B cell (primary cell): ENCODE measurements at regions of chr15 and their contacts with region 1.

Region 1: DNA sequence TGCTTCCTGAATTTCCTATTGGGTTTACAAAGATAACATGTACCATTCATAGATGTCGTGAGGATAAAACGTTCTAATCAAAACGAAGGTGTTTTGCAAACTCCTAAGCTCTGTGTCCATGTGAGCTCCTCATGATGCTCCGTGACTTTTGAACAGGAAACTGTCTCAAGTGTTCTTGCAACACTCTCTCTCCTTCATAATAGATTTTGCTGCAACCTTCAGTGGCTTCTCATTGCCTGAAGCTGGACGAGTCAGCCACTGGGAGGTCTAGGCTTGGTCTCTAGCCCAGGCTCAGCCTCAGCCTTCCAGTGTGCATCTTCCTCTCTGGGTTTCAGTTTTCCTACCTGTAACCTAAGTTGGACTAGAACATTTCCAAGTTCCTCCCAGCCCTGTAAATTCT is 18.7 kb upstream of the BCL2A1 start:
- DNase-seq: no peak
- ATAC-seq: no peak
- H3K4me3 ChIP-seq: no peak overlapping the region
- H3K4me3 Mint-ChIP-seq: no peak overlapping the region
- H3K27ac ChIP-seq: no peak overlapping the region
- H3K27ac Mint-ChIP-seq: no peak overlapping the region
- H3K4me1 ChIP-seq: peaks cover 0 to 5% of the 10 kb centered on the region in 2 donors
- H3K4me1 Mint-ChIP-seq: peaks cover 19% of the 10 kb centered on the region
- H3K27me3 ChIP-seq: peaks cover 0 to 12% (median 1%) of the 10 kb centered on the region in 4 experiments
- H3K27me3 Mint-ChIP-seq: peaks cover 5% of the 10 kb centered on the region
- CTCF ChIP-seq: no peak

Region 2: GRCh38 chr15:79798311-79798710 is 191.4 kb before region 1 on chr15:
- CTCF ChIA-PET with region 1: no interaction called
- POLR2A ChIA-PET with region 1: no interaction called
- intact Hi-C with region 1: no loop called
- DNase-seq: no peak
- ATAC-seq: no peak
- H3K4me3 ChIP-seq: no peak overlapping the region
- H3K4me3 Mint-ChIP-seq: no peak overlapping the region
- H3K27ac ChIP-seq: no peak overlapping the region
- H3K27ac Mint-ChIP-seq: no peak overlapping the region
- H3K4me1 ChIP-seq: no peaks in the 10 kb centered on the region
- H3K4me1 Mint-ChIP-seq: no peaks in the 10 kb centered on the region
- H3K27me3 ChIP-seq: no peaks in the 10 kb centered on the region
- H3K27me3 Mint-ChIP-seq: peaks cover 3% of the 10 kb centered on the region
- CTCF ChIP-seq: no peak

Region 3: DNA sequence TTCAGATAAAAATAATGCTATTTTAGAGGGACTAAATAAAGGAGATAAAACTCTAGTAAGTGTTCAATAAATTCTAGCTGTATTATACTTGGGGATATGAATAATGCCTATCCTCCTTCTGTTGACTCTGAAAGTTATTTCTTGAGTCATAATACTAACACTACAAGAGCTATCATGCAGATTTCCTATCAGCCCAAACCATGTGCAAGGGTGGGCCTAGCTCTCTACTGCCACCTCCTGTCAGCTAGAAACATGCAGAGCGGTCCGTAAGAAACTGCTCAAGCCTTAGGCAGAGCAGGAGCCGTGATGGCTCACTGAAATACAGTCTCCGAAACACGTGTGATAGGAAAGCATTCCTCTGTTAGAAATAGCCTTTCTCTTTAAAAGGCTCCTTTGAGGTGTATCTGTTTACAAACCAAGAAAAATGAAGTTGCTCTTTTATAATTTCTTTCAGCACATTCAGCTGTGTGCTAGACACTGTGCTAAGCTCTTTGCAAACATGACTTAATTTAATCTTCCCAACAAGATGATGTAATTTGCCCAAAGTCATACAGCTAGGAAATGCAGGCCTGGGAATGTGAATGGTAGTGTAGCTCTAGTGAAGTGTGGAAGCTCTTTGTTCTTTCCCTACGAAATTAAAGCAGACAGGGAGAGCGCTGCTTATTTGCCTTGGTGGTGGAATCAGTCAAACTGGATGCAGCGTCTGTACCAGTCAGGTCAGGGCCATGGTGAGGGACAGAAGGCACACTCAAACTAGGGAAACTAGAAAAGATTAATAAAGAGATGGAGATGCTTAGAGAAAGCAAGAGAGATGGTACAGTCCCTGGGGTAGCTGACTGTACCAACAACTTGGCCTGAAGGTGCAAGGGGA is 136.0 kb before region 1 on chr15:
- CTCF ChIA-PET with region 1: interaction called, 29 read pairs
- POLR2A ChIA-PET with region 1: no interaction called
- intact Hi-C with region 1: loop called (anchors 1 kb)
- DNase-seq: peak; percentile 73
- ATAC-seq: peak; percentile 97
- H3K4me3 ChIP-seq: no peak overlapping the region
- H3K4me3 Mint-ChIP-seq: no peak overlapping the region
- H3K27ac ChIP-seq: no peak overlapping the region
- H3K27ac Mint-ChIP-seq: no peak overlapping the region
- H3K4me1 ChIP-seq: peaks cover 7 to 8% of the 10 kb centered on the region in 2 donors
- H3K4me1 Mint-ChIP-seq: peaks cover 29% of the 10 kb centered on the region
- H3K27me3 ChIP-seq: no peaks in the 10 kb centered on the region
- H3K27me3 Mint-ChIP-seq: no peaks in the 10 kb centered on the region
- CTCF ChIP-seq: peak; percentile 98

Region 4: DNA sequence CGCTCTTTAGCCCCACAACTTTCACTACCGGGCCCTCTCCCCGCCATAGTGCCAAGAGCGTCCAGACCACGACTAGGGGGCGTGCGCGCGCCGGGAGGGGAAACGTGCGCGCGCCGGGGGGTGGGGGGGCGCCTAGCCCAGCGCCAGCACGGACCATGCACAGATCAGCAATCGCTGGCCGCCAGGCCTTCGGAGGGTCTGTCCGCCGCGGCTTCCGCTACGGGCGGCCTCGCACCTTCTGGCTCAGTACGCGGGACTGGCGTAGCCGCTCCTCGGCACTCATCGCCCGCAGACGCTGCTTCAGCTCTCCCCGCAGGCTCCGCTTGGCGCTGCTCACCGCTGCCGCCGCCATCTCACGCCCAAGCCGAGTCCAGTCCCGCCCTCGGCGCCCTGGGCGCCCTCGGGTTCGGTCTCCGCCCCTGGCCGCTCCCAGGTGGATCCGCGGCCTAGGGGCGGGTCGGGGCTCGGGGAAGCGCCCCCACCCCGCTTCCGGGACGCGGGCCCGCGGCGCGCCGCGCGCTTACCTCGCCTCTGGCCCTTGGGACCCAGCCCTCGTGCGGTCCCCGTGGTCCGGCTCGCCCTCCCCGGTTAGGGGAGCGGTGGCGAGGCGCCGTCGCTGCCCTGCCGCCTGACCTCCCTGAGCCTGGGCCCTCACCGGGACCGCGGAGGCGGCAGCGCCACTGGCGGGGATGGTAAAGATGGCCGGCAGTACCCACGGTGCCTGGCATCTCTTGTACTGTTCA is 92.9 kb before region 1 on chr15 and contains the start of gene MTHFS:
- CTCF ChIA-PET with region 1: interaction called, 40 read pairs
- POLR2A ChIA-PET with region 1: interaction called, 3 read pairs
- intact Hi-C with region 1: loop called (anchors 1 kb)
- DNase-seq: peak; percentile 93
- ATAC-seq: peak; percentile 92
- H3K4me3 ChIP-seq: peak within 1 kb of the TSS; percentile 71 to 85 (median 79)
- H3K4me3 Mint-ChIP-seq: peak within 1 kb of the TSS; percentile 97
- H3K27ac ChIP-seq: peak within 1 kb of the TSS; percentile 90 to 98
- H3K27ac Mint-ChIP-seq: peak within 1 kb of the TSS; percentile 98
- H3K4me1 ChIP-seq: peaks cover 23 to 32% of the 10 kb centered on the region in 2 donors
- H3K4me1 Mint-ChIP-seq: peaks cover 40% of the 10 kb centered on the region
- H3K27me3 ChIP-seq: no peaks in the 10 kb centered on the region
- H3K27me3 Mint-ChIP-seq: no peaks in the 10 kb centered on the region
- CTCF ChIP-seq: peak; percentile 68
- total RNA-seq, gene MTHFS: 20.1 and 24.4 TPM in 2 replicates

Region 5: DNA sequence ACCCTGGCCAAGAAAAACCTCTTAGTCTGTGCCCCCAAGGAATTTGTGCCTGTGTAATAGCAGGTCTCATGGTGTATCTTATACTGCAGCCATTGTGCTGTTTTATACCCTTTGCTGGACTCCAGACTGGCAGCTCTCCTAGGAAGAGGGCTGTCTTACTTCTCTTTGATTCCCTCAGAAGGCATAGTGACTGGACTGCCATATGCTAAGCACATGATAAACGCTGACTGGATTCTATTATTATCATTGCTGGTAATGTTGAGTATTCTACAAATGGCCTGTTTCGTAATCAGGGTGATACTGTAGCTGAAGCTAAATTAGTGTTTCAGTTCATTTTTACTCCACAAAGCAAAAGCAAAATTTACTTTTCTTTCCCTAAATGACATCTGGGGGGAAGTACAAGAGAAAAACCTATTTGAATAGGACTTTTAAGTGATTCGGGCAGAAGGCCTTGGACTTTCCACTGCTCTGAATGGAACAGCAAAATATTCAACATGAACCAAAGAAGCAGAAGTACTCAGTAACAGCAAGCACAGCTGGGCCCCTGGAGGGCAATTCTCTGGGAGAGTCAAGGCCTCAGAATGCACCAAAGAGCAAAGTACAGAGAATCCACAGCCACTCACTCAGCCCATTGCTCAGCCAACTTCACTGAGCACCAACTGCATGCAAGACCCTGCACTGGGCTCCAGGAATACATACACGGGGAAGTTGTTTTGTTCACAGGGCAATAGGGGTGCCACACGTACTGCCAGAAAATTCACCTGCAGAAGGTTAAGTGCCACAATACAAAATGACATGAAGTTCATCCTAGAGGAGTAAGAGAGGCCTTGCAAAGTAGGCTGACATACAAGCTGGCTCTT is 10.8 kb before region 1 on chr15:
- CTCF ChIA-PET with region 1: interaction called, 15 read pairs
- POLR2A ChIA-PET with region 1: interaction called, 4 read pairs
- intact Hi-C with region 1: loop called (anchors 1 kb)
- DNase-seq: peak; percentile 63
- ATAC-seq: peak; percentile 41
- H3K4me3 ChIP-seq: no peak overlapping the region
- H3K4me3 Mint-ChIP-seq: peak overlapping the region; percentile 87
- H3K27ac ChIP-seq: peak overlapping the region; percentile 57 to 79
- H3K27ac Mint-ChIP-seq: peak overlapping the region; percentile 76
- H3K4me1 ChIP-seq: peaks cover 50 to 55% of the 10 kb centered on the region in 2 donors
- H3K4me1 Mint-ChIP-seq: peaks cover 54% of the 10 kb centered on the region
- H3K27me3 ChIP-seq: peaks cover 0 to 3% (median under 1%) of the 10 kb centered on the region in 4 experiments
- H3K27me3 Mint-ChIP-seq: no peaks in the 10 kb centered on the region
- CTCF ChIP-seq: no peak

Region 6: GRCh38 chr15:80121546-80121945 is 131.9 kb after region 1 on chr15:
- CTCF ChIA-PET with region 1: no interaction called
- POLR2A ChIA-PET with region 1: no interaction called
- intact Hi-C with region 1: no loop called
- DNase-seq: no peak
- ATAC-seq: no peak
- H3K4me3 ChIP-seq: no peak overlapping the region
- H3K4me3 Mint-ChIP-seq: no peak overlapping the region
- H3K27ac ChIP-seq: no peak overlapping the region
- H3K27ac Mint-ChIP-seq: no peak overlapping the region
- H3K4me1 ChIP-seq: no peaks in the 10 kb centered on the region
- H3K4me1 Mint-ChIP-seq: peaks cover 15% of the 10 kb centered on the region
- H3K27me3 ChIP-seq: no peaks in the 10 kb centered on the region
- H3K27me3 Mint-ChIP-seq: no peaks in the 10 kb centered on the region
- CTCF ChIP-seq: no peak

Region 7: GRCh38 chr15:80173022-80173759 is 183.5 kb after region 1 on chr15:
- CTCF ChIA-PET with region 1: interaction called, 6 read pairs
- POLR2A ChIA-PET with region 1: no interaction called
- intact Hi-C with region 1: loop called (anchors 1 kb)
- DNase-seq: peak; percentile 72
- ATAC-seq: peak; percentile 84
- H3K4me3 ChIP-seq: no peak overlapping the region
- H3K4me3 Mint-ChIP-seq: no peak overlapping the region
- H3K27ac ChIP-seq: no peak overlapping the region
- H3K27ac Mint-ChIP-seq: no peak overlapping the region
- H3K4me1 ChIP-seq: no peaks in the 10 kb centered on the region
- H3K4me1 Mint-ChIP-seq: no peaks in the 10 kb centered on the region
- H3K27me3 ChIP-seq: no peaks in the 10 kb centered on the region
- H3K27me3 Mint-ChIP-seq: no peaks in the 10 kb centered on the region
- CTCF ChIP-seq: peak; percentile 82

Region 8: DNA sequence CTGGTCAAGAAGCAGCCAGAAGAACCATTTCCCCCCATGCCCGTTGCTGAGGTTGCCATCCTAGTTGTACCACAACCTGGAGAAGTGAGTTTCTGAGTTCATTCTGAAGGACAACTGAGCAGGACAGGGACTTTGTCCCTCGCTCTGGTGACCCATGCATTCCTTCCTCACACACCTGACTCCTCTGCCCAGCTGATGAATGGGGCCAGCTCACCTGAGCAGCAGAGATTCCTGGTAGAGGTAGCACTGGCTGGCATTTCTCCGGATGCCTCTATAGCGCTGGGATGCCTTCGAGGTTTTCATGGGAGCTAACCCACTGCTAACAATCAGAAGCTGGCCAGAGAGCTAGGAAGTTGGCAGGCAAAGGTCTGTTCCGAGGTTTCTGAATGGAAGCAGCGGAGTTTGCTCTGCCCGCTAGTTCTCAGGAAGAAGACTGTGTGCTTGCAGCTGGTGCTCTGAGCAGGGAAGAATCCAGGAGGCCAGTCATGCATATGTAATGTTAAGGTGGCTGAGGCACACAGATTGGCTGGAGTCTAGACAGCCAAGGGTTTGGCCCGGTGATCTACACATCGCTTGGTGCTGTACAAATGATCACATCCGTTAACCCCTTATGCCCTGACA is 1384.2 kb after region 1 on chr15 and contains the start of gene TMC3:
- CTCF ChIA-PET with region 1: no interaction called
- POLR2A ChIA-PET with region 1: no interaction called
- intact Hi-C with region 1: no loop called
- DNase-seq: no peak
- ATAC-seq: no peak
- H3K4me3 ChIP-seq: no peak within 1 kb of the TSS
- H3K4me3 Mint-ChIP-seq: no peak within 1 kb of the TSS
- H3K27ac ChIP-seq: no peak within 1 kb of the TSS
- H3K27ac Mint-ChIP-seq: no peak within 1 kb of the TSS
- H3K4me1 ChIP-seq: no peaks in the 10 kb centered on the region
- H3K4me1 Mint-ChIP-seq: no peaks in the 10 kb centered on the region
- H3K27me3 ChIP-seq: peaks cover 0 to 2% (median 0%) of the 10 kb centered on the region in 4 experiments
- H3K27me3 Mint-ChIP-seq: peaks cover 4% of the 10 kb centered on the region
- CTCF ChIP-seq: no peak
- total RNA-seq, gene TMC3: not detected in 2 replicates